Activated CD8-positive, alpha-beta T cell treated with anti-CD3 and anti-CD28 coated beads for 36 hours (primary cell): ENCODE measurements at regions of chr2 and their contacts with region 1.

Region 1: GRCh38 chr2:168346725-168347477 is 99.5 kb upstream of the STK39 start:
- DNase-seq: peak; percentile 79
- ATAC-seq: peak; percentile 79
- H3K4me3 Mint-ChIP-seq: peak overlapping the region; percentile 73
- H3K27ac Mint-ChIP-seq: peak overlapping the region; percentile 5
- H3K4me1 Mint-ChIP-seq: peaks cover 5% of the 10 kb centered on the region
- H3K27me3 Mint-ChIP-seq: peaks cover 1% of the 10 kb centered on the region
- CTCF ChIP-seq: peak; percentile 93

Region 2: DNA sequence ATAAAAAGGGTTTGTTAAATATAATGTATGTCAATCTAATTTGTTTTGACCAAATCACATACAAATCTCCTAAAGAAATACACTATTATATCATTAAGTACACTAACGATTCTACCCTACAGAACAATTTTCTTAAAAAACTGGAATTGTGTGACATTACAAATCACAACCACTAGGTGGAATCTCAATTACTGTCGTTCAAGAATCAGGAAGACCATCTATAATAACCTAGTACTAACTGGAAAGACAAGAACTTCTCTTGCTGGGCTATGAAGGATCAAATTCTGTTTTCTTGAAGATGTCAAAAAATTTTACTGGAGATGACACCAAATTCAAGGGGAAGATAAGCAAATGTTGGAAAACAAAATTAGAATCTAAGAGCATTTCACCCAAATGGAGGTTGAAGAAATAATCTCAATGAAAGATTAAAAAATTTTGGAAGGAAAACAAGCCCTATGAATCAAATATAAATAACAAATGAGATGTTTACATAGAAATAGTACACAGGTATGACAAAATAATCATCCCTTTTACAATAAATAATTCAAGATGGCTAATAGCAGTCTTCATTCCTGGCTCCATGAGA is 210.4 kb before region 1 on chr2:
- CTCF ChIA-PET with region 1: no interaction called
- POLR2A ChIA-PET with region 1: no interaction called
- intact Hi-C with region 1: no loop called
- DNase-seq: no peak
- ATAC-seq: peak; percentile 51
- H3K4me3 Mint-ChIP-seq: no peak overlapping the region
- H3K27ac Mint-ChIP-seq: no peak overlapping the region
- H3K4me1 Mint-ChIP-seq: peaks cover 8% of the 10 kb centered on the region
- H3K27me3 Mint-ChIP-seq: no peaks in the 10 kb centered on the region
- CTCF ChIP-seq: peak; percentile 72

Region 3: GRCh38 chr2:168357797-168358472 is 11.0 kb after region 1 on chr2:
- CTCF ChIA-PET with region 1: interaction called, 14 read pairs
- POLR2A ChIA-PET with region 1: no interaction called
- intact Hi-C with region 1: no loop called
- DNase-seq: no peak
- ATAC-seq: no peak
- H3K4me3 Mint-ChIP-seq: no peak overlapping the region
- H3K27ac Mint-ChIP-seq: no peak overlapping the region
- H3K4me1 Mint-ChIP-seq: peaks cover 28% of the 10 kb centered on the region
- H3K27me3 Mint-ChIP-seq: no peaks in the 10 kb centered on the region
- CTCF ChIP-seq: no peak

Region 4: DNA sequence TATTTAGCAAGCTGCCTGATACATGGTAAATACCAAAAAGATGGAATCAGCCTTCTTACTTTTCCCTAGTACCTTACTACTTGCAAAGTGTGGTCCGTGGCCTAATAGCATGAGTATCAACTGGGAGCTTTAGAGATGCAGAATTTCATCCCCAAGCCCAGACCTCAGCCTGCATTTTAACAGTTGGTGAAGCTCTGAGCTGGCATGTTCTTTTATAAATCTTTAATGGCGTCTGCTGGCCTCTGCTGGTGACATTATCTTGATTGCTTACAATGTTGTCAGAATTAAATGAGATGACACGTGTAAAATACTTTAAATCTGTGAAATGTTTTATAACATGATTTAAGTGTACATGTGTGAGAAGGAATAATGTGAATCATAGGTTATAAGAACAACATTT is 340.4 kb after region 1 on chr2:
- CTCF ChIA-PET with region 1: interaction called, 12 read pairs
- POLR2A ChIA-PET with region 1: no interaction called
- intact Hi-C with region 1: loop called (anchors 5 kb)
- DNase-seq: peak; percentile 38
- ATAC-seq: no peak
- H3K4me3 Mint-ChIP-seq: no peak overlapping the region
- H3K27ac Mint-ChIP-seq: no peak overlapping the region
- H3K4me1 Mint-ChIP-seq: peaks cover 11% of the 10 kb centered on the region
- H3K27me3 Mint-ChIP-seq: no peaks in the 10 kb centered on the region
- CTCF ChIP-seq: no peak

Region 5: GRCh38 chr2:168753765-168754329 is 406.9 kb after region 1 on chr2:
- CTCF ChIA-PET with region 1: interaction called, 19 read pairs
- POLR2A ChIA-PET with region 1: no interaction called
- intact Hi-C with region 1: loop called (anchors 2 kb)
- DNase-seq: no peak
- ATAC-seq: no peak
- H3K4me3 Mint-ChIP-seq: no peak overlapping the region
- H3K27ac Mint-ChIP-seq: no peak overlapping the region
- H3K4me1 Mint-ChIP-seq: peaks cover 71% of the 10 kb centered on the region
- H3K27me3 Mint-ChIP-seq: no peaks in the 10 kb centered on the region
- CTCF ChIP-seq: no peak

Region 6: DNA sequence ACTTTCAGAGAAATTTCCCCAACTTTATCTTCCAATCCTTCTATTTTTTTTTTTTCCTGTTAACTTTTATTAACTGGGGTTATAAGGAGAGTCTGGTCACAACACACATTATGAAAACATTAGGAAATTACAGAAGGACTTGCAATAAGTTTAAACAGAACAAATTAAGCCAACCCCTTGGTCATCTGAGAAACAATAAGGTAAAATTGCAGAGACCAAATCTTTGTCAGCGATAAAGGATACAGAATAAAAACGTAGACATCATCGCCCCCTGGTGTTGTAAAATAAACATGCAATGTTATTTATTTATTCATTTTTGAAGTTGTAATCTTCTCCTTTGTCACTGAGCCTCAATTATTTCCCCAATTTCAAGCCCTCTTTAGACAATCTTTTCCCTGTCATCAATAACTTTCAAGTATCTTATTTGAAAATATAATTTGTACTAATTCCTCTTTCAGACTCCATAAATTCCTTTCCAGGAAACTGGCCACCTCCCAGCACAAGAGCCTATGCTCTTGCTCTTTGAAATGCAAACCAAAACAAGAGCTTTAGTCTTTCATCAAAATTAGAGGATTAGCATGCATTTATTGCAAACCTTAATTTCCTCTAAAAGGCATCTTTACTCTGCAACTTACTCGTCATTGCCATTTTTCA is 573.7 kb after region 1 on chr2:
- CTCF ChIA-PET with region 1: interaction called, 29 read pairs
- POLR2A ChIA-PET with region 1: no interaction called
- intact Hi-C with region 1: loop called (anchors 2 kb)
- DNase-seq: no peak
- ATAC-seq: peak; percentile 34
- H3K4me3 Mint-ChIP-seq: no peak overlapping the region
- H3K27ac Mint-ChIP-seq: no peak overlapping the region
- H3K4me1 Mint-ChIP-seq: peaks cover 11% of the 10 kb centered on the region
- H3K27me3 Mint-ChIP-seq: peaks cover 12% of the 10 kb centered on the region
- CTCF ChIP-seq: peak; percentile 86